Right ventricle myocardium inferior (tissue), 1 donor: ENCODE measurements at regions of chr9 and their contacts with region 1.

Region 1: GRCh38 chr9:33225319-33226149 is 14.4 kb upstream of the SPINK4 start:
- DNase-seq: no peak
- ATAC-seq: no peak

Region 2: GRCh38 chr9:32581512-32582143 is 643.9 kb before region 1 on chr9:
- intact Hi-C with region 1: no loop called
- DNase-seq: no peak
- ATAC-seq: no peak

Region 3: DNA sequence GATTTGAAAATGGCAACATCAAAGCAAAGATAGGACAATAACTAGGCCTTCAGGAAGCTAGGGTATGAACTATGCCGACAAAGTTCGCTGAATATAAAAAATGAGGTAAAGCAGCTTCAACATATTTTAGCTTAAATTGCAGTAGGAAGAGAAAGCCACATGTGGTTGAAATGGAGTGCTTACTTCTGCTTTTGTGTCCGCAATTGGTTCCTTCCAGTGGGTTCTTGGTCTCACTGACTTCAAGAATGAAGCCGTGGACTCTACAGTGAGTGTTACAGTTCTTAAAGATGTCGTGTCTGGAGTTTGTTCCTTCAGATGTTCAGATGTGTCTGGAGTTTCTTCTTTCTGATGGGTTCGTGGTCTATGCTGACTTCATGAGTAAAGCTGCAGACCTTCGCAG is 319.3 kb before region 1 on chr9:
- intact Hi-C with region 1: no loop called
- DNase-seq: no peak
- ATAC-seq: no peak

Region 4: GRCh38 chr9:32954642-32955041 is 270.9 kb before region 1 on chr9:
- intact Hi-C with region 1: no loop called
- DNase-seq: no peak
- ATAC-seq: no peak

Region 5: GRCh38 chr9:33167046-33167808 is 58.3 kb before region 1 on chr9 and contains the start of gene B4GALT1:
- intact Hi-C with region 1: loop called (anchors 5 kb)
- DNase-seq: peak; percentile 98
- ATAC-seq: peak; percentile 83
- total RNA-seq, gene B4GALT1: 43.6 TPM

Region 6: DNA sequence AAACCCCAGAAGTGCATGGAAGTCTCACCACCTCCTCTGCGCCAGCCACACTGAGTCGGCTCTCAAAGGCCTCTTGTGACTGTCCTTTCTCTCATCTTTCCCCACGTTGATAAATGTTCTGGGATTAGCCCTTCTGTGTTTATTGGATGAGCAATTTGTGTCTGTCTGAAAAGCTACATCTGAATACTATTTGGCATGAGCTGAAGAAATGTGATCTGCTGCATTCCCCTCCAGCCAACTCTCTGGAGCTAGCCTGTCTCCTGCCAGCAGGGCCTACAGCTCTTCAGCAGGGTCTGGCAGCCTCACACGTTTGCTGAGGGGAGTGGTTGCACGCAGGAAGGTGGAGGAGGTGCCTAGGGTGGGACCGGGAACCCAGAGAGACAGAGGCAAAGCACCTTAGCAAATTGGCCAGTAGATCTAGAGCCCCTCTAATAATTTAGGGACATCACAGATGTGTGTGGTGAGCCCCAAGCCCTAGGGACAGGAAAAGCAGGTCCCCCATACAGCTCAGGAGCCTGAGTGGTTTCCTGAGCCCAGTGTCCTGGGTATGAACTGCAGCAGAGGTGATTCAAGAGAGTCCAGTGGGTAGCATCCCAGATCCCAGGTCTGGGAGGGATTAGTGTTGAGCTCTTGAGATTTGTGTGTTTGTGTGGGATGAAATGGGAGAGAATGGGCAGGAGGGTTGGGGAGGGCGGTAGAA is 37.9 kb before region 1 on chr9:
- intact Hi-C with region 1: loop called (anchors 5 kb)
- DNase-seq: no peak
- ATAC-seq: peak; percentile 87

Region 7: DNA sequence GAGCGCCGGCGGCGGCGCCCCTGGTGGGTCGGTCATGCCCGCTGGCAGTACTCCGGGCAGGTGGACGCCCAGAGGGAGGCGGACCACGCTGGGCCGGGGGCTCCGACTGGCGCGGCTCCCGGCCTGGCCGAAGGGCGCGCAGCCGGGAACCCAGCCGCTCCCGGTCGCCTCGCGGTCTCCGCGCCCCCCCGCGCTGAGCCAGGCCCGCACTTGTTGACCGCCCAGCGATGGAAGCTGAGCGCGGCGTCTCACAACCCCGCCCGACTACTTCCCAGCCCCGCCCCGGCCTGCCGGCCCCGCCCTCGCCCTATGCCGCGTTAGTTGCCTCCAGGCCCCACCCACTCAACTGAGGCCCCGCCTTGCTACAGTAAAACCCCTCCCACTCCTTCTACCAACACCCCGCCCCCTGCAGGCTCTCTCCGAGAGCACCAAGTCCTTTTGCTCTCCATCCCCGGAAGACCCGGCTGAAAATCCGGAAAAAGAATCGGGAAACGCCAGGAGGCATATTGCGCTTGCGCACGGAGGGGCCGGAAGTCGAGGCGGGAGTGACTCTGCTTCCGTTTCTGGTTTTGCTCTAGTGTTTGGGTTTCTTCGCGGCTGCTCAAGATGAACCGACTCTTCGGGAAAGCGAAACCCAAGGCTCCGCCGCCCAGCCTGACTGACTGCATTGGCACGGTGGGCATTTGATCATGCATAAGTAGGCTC is 39.1 kb after region 1 on chr9 and contains the starts of genes BAG1 and CHMP5:
- intact Hi-C with region 1: no loop called
- DNase-seq: peak; percentile 100
- ATAC-seq: peak; percentile 99
- total RNA-seq, gene BAG1: 132 TPM
- total RNA-seq, gene CHMP5: 51.5 TPM